ENCODE measurements at regions of chr1 and their contacts with region 1.

Region 1: DNA sequence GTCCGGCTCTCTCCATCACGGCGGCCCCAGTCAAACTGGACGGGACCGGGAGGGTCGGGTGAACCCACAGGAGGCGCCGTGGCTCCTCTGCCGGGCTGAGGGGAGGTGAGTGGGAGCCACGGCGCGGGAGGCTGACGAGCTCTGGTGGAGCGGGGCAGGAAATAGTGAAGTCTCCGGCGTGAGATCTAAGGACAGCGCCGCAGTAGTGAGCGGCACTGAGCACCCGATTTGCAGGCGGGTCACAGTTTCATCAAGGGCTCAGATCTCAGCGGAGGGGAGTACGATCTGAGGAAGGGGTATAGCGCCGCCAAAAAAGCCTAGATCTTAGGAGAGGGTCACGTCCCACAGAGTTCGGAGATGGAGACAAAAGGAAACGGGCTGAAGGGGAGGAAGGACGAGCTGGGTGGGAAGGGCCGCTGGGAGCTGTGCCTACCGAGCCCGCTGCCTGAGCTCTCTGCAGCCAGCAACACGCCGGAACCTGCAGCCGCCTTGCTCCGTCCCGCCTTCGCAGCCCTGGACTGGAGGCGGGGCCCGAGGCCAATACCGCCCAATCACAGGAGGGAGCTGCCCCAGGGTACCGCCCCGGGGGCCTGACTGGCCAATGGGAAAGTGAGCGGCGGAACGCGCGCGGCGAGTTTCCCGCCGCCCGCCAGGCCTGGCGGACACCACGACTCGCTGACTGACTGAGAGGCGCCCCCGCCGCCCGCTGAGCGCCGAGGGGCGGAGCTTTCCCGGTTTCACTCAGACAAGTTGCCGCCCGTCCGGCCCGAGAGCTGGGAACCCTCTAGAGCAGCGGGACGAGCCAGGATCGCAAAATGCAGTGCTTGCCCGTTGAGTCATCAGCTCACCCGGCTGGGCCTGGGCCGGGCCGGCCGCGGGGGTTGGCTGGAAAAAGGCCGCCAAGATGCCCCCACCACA is 1.9 kb downstream of the SFN start:
- DNase-seq: peak; percentile 99
- H3K4me3 Mint-ChIP-seq: peak overlapping the region; percentile 97
- H3K27ac Mint-ChIP-seq: peak overlapping the region; percentile 94
- H3K4me1 Mint-ChIP-seq: peaks cover 21% of the 10 kb centered on the region
- H3K27me3 Mint-ChIP-seq: no peaks in the 10 kb centered on the region
- CTCF ChIP-seq: no peak

Region 2: GRCh38 chr1:26826261-26827105 is 38.4 kb before region 1 on chr1 and contains the start of gene ZDHHC18:
- CTCF ChIA-PET with region 1: interaction called, 6 read pairs
- POLR2A ChIA-PET with region 1: interaction called, 12 read pairs
- intact Hi-C with region 1: no loop called
- DNase-seq: peak; percentile 56
- H3K4me3 Mint-ChIP-seq: peak within 1 kb of the TSS; percentile 83
- H3K27ac Mint-ChIP-seq: peak within 1 kb of the TSS; percentile 86
- H3K4me1 Mint-ChIP-seq: peaks cover 20% of the 10 kb centered on the region
- H3K27me3 Mint-ChIP-seq: no peaks in the 10 kb centered on the region
- CTCF ChIP-seq: peak; percentile 69
- total RNA-seq, gene ZDHHC18: 14.0 and 15.5 TPM in 2 replicates

Region 3: DNA sequence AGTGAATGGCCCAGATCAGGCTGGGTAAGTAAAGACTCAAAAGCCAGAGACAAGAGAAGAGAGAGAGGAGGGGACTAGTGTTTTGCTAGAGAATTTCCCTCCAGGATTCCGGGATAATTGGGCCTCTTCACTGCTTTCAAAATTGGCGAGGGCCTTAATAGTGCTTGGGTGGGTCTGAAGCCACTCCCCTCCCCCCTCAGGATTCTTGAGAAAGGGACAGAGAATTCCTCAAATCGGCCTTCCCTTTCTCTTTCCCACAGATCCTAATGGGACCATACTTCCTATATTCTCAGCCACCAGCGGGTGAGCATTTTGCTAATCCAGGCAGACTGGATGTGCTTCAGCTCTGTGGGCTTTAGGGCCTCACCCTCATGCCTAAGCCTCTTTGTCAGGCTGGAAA is 10.0 kb after region 1 on chr1:
- CTCF ChIA-PET with region 1: interaction called, 28 read pairs
- POLR2A ChIA-PET with region 1: interaction called, 12 read pairs
- intact Hi-C with region 1: no loop called
- DNase-seq: no peak
- H3K4me3 Mint-ChIP-seq: no peak overlapping the region
- H3K27ac Mint-ChIP-seq: peak overlapping the region; percentile 40
- H3K4me1 Mint-ChIP-seq: no peaks in the 10 kb centered on the region
- H3K27me3 Mint-ChIP-seq: no peaks in the 10 kb centered on the region
- CTCF ChIP-seq: no peak

Region 4: GRCh38 chr1:26889551-26890466 is 24.9 kb after region 1 on chr1 and contains the start of gene GPN2:
- CTCF ChIA-PET with region 1: interaction called, 18 read pairs
- POLR2A ChIA-PET with region 1: interaction called, 50 read pairs
- intact Hi-C with region 1: no loop called
- DNase-seq: peak; percentile 75
- H3K4me3 Mint-ChIP-seq: peak within 1 kb of the TSS; percentile 91
- H3K27ac Mint-ChIP-seq: peak within 1 kb of the TSS; percentile 93
- H3K4me1 Mint-ChIP-seq: peaks cover 23% of the 10 kb centered on the region
- H3K27me3 Mint-ChIP-seq: no peaks in the 10 kb centered on the region
- CTCF ChIP-seq: no peak
- total RNA-seq, gene GPN2: 38.9 and 39.7 TPM in 2 replicates

Region 5: GRCh38 chr1:26907071-26907917 is 42.4 kb after region 1 on chr1:
- CTCF ChIA-PET with region 1: no interaction called
- POLR2A ChIA-PET with region 1: no interaction called
- intact Hi-C with region 1: no loop called
- DNase-seq: peak; percentile 88
- H3K4me3 Mint-ChIP-seq: no peak overlapping the region
- H3K27ac Mint-ChIP-seq: peak overlapping the region; percentile 6
- H3K4me1 Mint-ChIP-seq: peaks cover 15% of the 10 kb centered on the region
- H3K27me3 Mint-ChIP-seq: no peaks in the 10 kb centered on the region
- CTCF ChIP-seq: no peak

Region 6: DNA sequence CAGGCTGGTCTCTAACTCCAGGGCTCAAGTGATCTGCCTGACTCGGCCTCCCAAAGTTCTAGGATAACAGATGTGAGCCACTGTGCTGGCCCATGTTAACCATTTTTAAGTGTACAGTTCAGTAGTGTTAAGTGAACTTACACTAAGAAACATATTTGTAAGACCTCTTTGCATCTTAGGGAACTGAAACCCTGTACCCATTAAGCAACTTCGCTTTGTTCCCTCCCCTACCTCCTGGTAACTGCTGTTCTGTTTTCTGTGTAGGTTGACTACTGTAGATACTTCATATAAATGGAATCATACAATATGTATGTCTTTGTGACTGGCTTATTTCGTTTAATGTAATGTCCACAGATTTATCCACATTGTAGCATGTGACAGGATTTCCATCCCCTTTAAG is 67.7 kb after region 1 on chr1:
- CTCF ChIA-PET with region 1: no interaction called
- POLR2A ChIA-PET with region 1: no interaction called
- intact Hi-C with region 1: no loop called
- DNase-seq: no peak
- H3K4me3 Mint-ChIP-seq: no peak overlapping the region
- H3K27ac Mint-ChIP-seq: no peak overlapping the region
- H3K4me1 Mint-ChIP-seq: no peaks in the 10 kb centered on the region
- H3K27me3 Mint-ChIP-seq: no peaks in the 10 kb centered on the region
- CTCF ChIP-seq: no peak

Region 7: GRCh38 chr1:26959722-26960615 is 95.1 kb after region 1 on chr1 and contains the start of gene KDF1:
- CTCF ChIA-PET with region 1: no interaction called
- POLR2A ChIA-PET with region 1: interaction called, 16 read pairs
- intact Hi-C with region 1: no loop called
- DNase-seq: peak; percentile 80
- H3K4me3 Mint-ChIP-seq: peak within 1 kb of the TSS; percentile 91
- H3K27ac Mint-ChIP-seq: peak within 1 kb of the TSS; percentile 85
- H3K4me1 Mint-ChIP-seq: peaks cover 36% of the 10 kb centered on the region
- H3K27me3 Mint-ChIP-seq: no peaks in the 10 kb centered on the region
- CTCF ChIP-seq: peak; percentile 15
- total RNA-seq, gene KDF1: 5.1 and 8.8 TPM in 2 replicates

Region 8: DNA sequence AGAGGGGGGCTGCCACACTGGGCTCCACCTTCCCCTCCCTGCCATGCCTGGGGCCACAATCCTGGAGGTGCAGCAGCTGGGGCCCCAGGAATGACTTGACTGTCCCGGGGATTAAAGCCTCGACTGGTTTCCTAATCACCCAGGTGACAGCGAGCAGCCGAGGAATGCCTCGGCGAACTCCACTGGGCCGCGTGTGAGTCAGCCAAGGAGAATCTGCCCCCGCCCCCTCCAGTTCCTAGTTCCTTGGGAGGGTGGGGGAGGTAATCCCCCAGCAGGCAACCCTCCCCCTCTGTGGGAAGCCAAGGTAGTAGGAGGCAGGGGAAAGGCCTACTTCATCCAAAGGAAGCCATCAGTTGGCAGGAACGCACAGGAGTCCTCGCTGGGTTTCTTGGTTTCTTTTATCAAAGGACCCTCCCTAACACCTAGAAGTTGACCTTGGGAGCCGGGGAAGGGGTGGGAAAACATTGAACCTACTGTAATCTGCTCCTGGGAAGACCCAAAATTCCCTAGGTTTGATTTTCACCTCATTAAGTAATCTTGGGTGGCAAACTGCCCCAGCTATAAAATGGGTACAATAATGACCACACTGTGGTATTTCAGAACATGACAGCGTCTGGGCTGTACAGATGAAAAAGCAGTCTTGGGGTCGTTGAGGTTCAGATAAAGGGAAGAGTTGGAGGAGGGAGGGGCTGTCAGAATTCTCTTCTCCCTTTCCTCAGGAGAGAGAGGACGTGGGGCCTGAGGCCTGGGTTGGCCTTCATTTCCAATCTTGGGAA is 146.3 kb after region 1 on chr1:
- CTCF ChIA-PET with region 1: no interaction called
- POLR2A ChIA-PET with region 1: interaction called, 13 read pairs
- intact Hi-C with region 1: no loop called
- DNase-seq: peak; percentile 95
- H3K4me3 Mint-ChIP-seq: peak overlapping the region; percentile 78
- H3K27ac Mint-ChIP-seq: peak overlapping the region; percentile 78
- H3K4me1 Mint-ChIP-seq: peaks cover 14% of the 10 kb centered on the region
- H3K27me3 Mint-ChIP-seq: no peaks in the 10 kb centered on the region
- CTCF ChIP-seq: no peak

Measured in MCF 10A (cell line).